Breast epithelium (tissue), 4 donors: ENCODE measurements at regions of chr1 and their contacts with region 1.

Region 1: DNA sequence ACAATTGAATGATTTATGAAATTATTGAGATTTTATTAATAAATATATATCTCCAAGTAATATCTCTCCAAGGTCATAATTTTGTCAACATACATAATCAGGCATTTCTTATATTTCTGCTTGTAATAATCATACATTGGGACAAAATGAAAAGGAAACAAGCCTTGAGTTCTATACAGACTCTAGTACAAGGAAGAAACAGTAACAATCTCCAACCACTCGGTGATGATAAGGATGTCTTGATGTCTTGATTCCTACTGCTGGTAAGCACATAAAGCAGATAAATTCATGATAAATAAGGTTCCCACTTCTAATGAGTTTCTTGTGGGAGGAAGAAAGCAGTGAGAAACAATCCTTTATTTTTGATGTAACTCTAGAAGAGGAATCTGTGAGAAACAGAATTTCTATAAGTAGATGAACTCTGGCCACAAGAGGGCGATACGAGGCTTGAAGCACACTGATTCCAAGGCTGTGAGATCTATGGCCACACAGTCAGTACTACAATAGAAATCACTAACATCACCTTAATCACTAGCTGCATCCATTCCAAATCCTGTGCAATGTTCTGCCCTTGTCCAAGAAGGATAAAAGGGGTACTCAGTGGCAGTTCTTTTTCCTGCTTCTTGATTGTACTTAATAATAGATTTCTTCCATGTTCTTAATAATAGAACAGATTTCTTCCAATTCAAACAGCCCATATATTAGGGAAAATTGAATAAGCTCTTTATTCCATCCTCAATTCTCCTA is 41.4 kb upstream of the LRRC8B start:
- DNase-seq: peak in 1 of 2 donors; percentile 54
- H3K4me3 ChIP-seq: no peak overlapping the region
- H3K27ac ChIP-seq: no peak overlapping the region
- H3K4me1 ChIP-seq: no peaks in the 10 kb centered on the region
- H3K27me3 ChIP-seq: no peaks in the 10 kb centered on the region
- CTCF ChIP-seq: peak; percentile 41 to 69 (median 56)
- POLR2A ChIP-seq: no peak

Region 2: GRCh38 chr1:88897070-88897730 is 586.0 kb before region 1 on chr1:
- intact Hi-C with region 1: no loop called
- DNase-seq: no peak
- H3K4me3 ChIP-seq: no peak overlapping the region
- H3K27ac ChIP-seq: no peak overlapping the region
- H3K4me1 ChIP-seq: no peaks in the 10 kb centered on the region
- H3K27me3 ChIP-seq: no peaks in the 10 kb centered on the region
- CTCF ChIP-seq: no peak
- POLR2A ChIP-seq: no peak

Region 3: GRCh38 chr1:89757532-89757931 is 274.3 kb after region 1 on chr1:
- intact Hi-C with region 1: loop called (anchors 10 kb)
- DNase-seq: no peak
- H3K4me3 ChIP-seq: no peak overlapping the region
- H3K27ac ChIP-seq: peak overlapping the region in 1 of 2 donors; percentile 23
- H3K4me1 ChIP-seq: no peaks in the 10 kb centered on the region
- H3K27me3 ChIP-seq: no peaks in the 10 kb centered on the region
- CTCF ChIP-seq: no peak
- POLR2A ChIP-seq: no peak